GM23248 (cell line): ENCODE measurements at regions of chr3 and their contacts with region 1.

Region 1: GRCh38 chr3:40580494-40581091 is 55.8 kb downstream of the ZNF621 start:
- DNase-seq: peak; percentile 83
- H3K4me3 ChIP-seq: no peak overlapping the region
- H3K27ac ChIP-seq: no peak overlapping the region
- H3K4me1 ChIP-seq: no peaks in the 10 kb centered on the region
- H3K27me3 ChIP-seq: no peaks in the 10 kb centered on the region

Region 2: GRCh38 chr3:40229386-40229785 is 351.2 kb before region 1 on chr3:
- in situ Hi-C with region 1: no loop called
- DNase-seq: no peak
- H3K4me3 ChIP-seq: no peak overlapping the region
- H3K27ac ChIP-seq: no peak overlapping the region
- H3K4me1 ChIP-seq: no peaks in the 10 kb centered on the region
- H3K27me3 ChIP-seq: no peaks in the 10 kb centered on the region

Region 3: GRCh38 chr3:40337136-40338108 is 243.2 kb before region 1 on chr3:
- in situ Hi-C with region 1: loop called (anchors 25 kb)
- DNase-seq: peak; percentile 43
- H3K4me3 ChIP-seq: no peak overlapping the region
- H3K27ac ChIP-seq: no peak overlapping the region
- H3K4me1 ChIP-seq: no peaks in the 10 kb centered on the region
- H3K27me3 ChIP-seq: no peaks in the 10 kb centered on the region

Region 4: DNA sequence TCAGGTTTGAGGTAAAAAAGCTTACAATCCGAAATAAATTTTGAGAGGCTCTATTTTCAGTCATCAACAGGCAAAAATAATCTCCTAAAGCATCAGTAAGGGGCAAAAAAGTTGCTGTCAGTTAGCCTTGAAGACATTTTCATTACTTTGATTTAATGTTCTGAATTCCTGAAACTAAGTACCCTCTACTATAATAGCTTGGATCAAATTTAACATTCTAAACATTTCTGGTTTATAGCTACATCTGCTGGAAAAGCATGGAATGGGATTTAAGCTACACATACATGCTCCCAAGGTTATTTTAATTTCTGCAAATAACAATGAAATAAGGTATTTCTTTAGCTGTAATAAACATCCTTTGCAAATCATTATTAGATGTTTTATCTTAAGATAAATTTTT is 1135.9 kb after region 1 on chr3:
- in situ Hi-C with region 1: loop called (anchors 25 kb)
- DNase-seq: peak; percentile 45
- H3K4me3 ChIP-seq: no peak overlapping the region
- H3K27ac ChIP-seq: no peak overlapping the region
- H3K4me1 ChIP-seq: peaks cover 8% of the 10 kb centered on the region
- H3K27me3 ChIP-seq: no peaks in the 10 kb centered on the region

Region 5: GRCh38 chr3:41872157-41872556 is 1291.6 kb after region 1 on chr3:
- in situ Hi-C with region 1: loop called (anchors 10 kb)
- DNase-seq: no peak
- H3K4me3 ChIP-seq: no peak overlapping the region
- H3K27ac ChIP-seq: no peak overlapping the region
- H3K4me1 ChIP-seq: no peaks in the 10 kb centered on the region
- H3K27me3 ChIP-seq: no peaks in the 10 kb centered on the region